Stomach (tissue), 19 donors: ENCODE measurements at regions of chr3 and their contacts with region 1.

Region 1: DNA sequence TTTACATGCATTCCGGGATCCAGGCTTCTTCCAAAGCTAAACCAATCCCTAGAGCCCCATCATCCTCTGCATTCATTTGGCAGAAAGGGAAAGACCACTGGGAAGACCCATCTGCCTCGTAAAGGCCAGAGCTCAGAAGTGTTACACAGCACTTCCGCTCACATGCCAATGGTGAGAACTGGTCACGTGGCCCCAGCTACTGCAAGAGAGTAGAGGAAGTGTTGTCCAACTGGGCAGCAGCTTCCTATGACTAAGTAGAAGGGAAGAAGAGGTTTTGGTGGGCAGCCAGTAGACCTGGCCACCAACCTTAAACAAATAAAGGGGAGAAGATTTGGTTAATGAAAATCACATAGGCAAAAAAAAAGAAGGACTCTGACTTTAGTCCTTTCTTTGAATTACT is 74.4 kb upstream of the PPP2R3A start:
- DNase-seq: no peak
- H3K4me3 ChIP-seq: no peak overlapping the region
- H3K27ac ChIP-seq: no peak overlapping the region
- H3K4me1 ChIP-seq: peaks cover 0 to 3% (median 0%) of the 10 kb centered on the region in 4 donors
- H3K27me3 ChIP-seq: no peaks in the 10 kb centered on the region
- CTCF ChIP-seq: no peak
- EP300 ChIP-seq: no peak
- POLR2A ChIP-seq: no peak

Region 2: DNA sequence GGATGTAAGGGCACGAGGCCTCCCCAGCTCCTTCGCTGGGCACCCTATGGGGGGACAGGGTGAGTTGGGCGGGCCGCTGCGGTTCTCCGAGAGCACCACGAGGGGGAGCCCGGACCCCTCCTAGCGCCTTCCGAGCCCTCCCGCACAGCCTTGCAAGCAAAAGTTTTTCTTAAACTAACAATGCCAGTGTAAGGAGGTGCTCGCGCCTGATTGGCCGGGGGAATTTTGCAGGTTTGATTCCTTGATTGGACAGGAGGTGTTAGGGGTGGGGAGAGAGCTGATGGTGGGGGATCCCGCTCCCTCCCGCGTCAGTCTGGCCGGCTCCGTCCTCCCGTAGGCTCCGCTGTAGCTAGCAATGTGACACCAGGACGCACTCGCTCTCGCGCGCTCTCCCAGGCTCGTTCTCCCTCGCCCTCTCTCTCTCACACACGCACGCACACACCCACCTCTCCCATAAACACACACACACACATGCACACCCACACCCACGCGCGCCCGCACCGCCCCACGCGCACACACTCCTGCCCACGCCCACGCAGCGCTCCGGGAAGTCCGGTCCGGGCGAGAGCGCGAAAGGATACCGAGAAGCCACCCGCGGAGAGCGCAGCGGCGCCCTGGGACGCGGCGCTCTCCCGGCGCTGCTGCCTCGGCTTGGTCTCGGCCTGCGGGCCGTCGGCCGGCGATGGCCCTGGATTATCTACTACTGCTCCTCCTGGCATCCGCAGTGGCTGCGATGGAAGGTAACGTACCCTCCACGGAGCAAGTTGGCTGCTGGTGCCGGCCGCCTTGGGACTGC is 1096.0 kb before region 1 on chr3 and contains the start of gene EPHB1:
- intact Hi-C with region 1: loop called (anchors 5 kb)
- DNase-seq: peak; percentile 74 to 95
- H3K4me3 ChIP-seq: peak within 1 kb of the TSS; percentile 46 to 75 (median 57)
- H3K27ac ChIP-seq: peak within 1 kb of the TSS in 2 of 5 donors; percentile 43 to 52
- H3K4me1 ChIP-seq: peaks cover 17 to 38% (median 29%) of the 10 kb centered on the region in 4 donors
- H3K27me3 ChIP-seq: peaks cover 3 to 44% (median 25%) of the 10 kb centered on the region in 3 donors
- CTCF ChIP-seq: peak in 5 of 7 experiments; percentile 50 to 92 (median 76)
- EP300 ChIP-seq: no peak
- POLR2A ChIP-seq: no peak
- total RNA-seq, gene EPHB1: 0.73 to 2.3 (median 1.3) TPM in 3 of 5 donors, not detected in the others

Region 3: GRCh38 chr3:135736740-135737139 is 154.4 kb before region 1 on chr3:
- intact Hi-C with region 1: no loop called
- DNase-seq: no peak
- H3K4me3 ChIP-seq: no peak overlapping the region
- H3K27ac ChIP-seq: no peak overlapping the region
- H3K4me1 ChIP-seq: no peaks in the 10 kb centered on the region
- H3K27me3 ChIP-seq: no peaks in the 10 kb centered on the region
- CTCF ChIP-seq: no peak
- EP300 ChIP-seq: no peak
- POLR2A ChIP-seq: no peak